Activated CD8-positive, alpha-beta memory T cell treated with anti-CD3 and anti-CD28 coated beads, Interleukin-2, amount 10 ng/mL, durations not matched to agents 7 days and 5 days (primary cell): ENCODE measurements at regions of chr1 and their contacts with region 1.

Region 1: GRCh38 chr1:95233737-95234500 is at the start of gene RWDD3:
- DNase-seq: peak; percentile 93
- ATAC-seq: peak; percentile 96
- H3K4me3 Mint-ChIP-seq: peak within 1 kb of the TSS; percentile 85
- H3K27ac Mint-ChIP-seq: peak within 1 kb of the TSS; percentile 89
- H3K4me1 Mint-ChIP-seq: peaks cover 34% of the 10 kb centered on the region
- H3K27me3 Mint-ChIP-seq: peaks cover 24% of the 10 kb centered on the region
- total RNA-seq, gene RWDD3: 11.7 to 13.8 TPM

Region 2: DNA sequence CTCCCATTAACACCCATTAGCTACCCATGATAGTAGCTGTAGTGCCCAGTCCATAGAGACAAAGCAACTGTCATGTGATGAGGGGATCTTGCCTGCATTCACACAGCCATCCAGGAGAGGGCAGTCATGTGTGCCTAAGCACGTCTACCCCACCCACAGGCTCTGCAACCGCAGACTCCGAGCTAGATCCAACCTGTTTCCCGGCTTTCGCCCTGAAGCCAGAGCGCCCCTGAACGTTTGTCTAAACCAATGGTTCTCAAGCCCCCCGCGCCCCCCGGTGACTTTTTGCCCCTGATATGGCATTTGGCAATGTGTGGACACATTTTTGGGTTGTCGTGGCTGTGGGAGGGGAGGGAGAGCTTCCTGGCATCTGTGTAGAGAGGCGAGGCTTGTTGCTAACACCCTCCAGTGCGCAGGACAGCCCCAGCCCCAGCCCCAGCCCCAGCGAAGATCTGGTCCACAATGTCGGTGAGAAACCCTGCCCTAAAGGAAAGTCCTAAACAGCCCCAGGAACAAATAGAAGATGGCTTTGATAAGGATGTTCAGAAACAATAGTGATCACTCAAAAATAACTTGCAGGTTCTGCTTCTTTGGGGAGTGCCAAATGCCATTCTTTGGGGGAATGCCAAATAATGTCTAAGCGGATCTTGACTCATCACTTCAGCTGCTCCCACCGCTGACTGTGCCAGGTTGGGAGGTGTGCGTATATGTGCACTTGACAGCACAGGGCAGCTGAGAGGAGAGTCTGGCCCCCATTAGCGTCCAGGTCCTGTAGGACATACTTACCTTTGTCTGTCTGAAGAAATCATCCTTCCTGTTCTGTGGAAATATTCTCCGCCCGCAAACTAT is 379.2 kb before region 1 on chr1:
- CTCF ChIA-PET with region 1: interaction called, 16 read pairs
- DNase-seq: peak; percentile 88
- ATAC-seq: peak; percentile 99
- H3K4me3 Mint-ChIP-seq: no peak overlapping the region
- H3K27ac Mint-ChIP-seq: no peak overlapping the region
- H3K4me1 Mint-ChIP-seq: no peaks in the 10 kb centered on the region
- H3K27me3 Mint-ChIP-seq: peaks cover 4% of the 10 kb centered on the region

Region 3: GRCh38 chr1:95072532-95073419 is 161.1 kb before region 1 on chr1 and contains the start of gene ALG14:
- CTCF ChIA-PET with region 1: interaction called, 27 read pairs
- DNase-seq: peak; percentile 95
- ATAC-seq: peak; percentile 97
- H3K4me3 Mint-ChIP-seq: peak within 1 kb of the TSS; percentile 87
- H3K27ac Mint-ChIP-seq: peak within 1 kb of the TSS; percentile 89
- H3K4me1 Mint-ChIP-seq: peaks cover 20% of the 10 kb centered on the region
- H3K27me3 Mint-ChIP-seq: peaks cover 4% of the 10 kb centered on the region
- total RNA-seq, gene ALG14: 2.6 to 2.8 TPM

Region 4: DNA sequence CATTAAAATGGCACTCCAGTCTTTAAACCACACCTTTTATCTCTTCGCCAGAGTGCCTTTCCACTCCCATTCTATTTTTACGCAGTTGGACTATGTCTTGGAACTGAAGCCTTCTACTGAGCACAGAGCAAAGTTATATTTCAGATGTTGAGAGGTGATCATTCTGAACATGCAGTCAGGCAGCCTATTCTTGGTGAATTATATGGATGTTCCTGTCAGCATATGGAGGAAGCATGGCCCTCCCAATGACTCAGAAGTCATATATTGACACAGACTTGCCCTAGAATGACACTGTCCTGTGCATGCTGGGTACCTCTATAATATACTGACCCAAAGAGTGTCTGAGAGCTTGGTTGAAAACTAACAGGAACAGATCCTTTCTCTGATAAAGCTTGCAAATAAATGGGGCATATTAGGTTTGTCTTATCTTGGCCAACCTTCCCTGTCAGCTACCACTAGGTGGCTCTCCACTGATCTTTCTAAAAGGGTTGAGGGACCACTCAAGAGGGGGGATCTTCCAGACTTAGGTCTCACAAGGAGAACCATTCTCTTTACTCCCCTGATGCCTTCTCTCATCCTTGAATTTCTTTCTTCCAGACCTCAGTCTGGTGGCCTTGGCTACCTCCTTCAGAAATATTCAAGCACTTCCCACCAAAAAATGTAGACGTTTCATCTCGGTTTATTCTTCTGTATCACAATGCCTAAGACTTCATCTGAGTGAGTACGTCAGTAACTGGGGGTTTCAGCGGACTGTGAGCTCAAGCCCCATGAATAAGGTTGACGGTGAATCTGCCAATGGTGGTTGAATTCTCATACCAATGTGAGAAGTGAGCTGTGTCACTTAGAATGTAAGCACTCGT is 149.4 kb before region 1 on chr1:
- CTCF ChIA-PET with region 1: interaction called, 18 read pairs
- DNase-seq: no peak
- ATAC-seq: no peak
- H3K4me3 Mint-ChIP-seq: no peak overlapping the region
- H3K27ac Mint-ChIP-seq: no peak overlapping the region
- H3K4me1 Mint-ChIP-seq: no peaks in the 10 kb centered on the region
- H3K27me3 Mint-ChIP-seq: peaks cover 20% of the 10 kb centered on the region

Region 5: DNA sequence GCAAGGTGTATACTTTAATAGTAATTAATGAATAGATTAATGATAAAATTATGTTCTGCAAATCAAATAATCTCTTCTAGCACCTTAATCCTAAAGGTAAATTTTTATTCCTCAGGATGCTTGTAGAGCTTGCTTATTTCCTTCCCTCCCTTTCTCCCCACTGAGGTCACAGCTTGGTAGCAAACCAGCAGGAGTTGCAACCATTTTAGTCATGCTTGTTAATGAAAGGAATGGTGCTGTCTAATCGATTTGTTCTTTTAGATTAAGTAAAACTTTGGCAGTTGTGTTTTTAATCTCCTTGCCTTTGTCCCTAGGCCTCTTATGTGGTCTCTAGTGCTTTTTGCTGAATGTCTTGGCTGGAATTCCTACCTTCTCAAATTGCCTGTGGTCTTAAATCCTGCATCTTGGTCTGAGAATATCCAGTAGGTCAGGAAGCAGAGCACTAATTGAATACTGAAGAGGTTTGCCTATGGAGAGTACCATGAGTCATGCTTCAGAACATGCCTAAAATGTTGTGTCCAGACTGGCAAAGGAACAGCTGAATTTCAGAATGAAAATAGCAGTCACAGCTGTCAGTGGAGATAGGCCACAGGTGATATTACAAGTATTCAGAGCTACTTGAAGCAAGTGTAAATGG is 36.2 kb before region 1 on chr1:
- CTCF ChIA-PET with region 1: no interaction called
- DNase-seq: no peak
- ATAC-seq: no peak
- H3K4me3 Mint-ChIP-seq: no peak overlapping the region
- H3K27ac Mint-ChIP-seq: no peak overlapping the region
- H3K4me1 Mint-ChIP-seq: no peaks in the 10 kb centered on the region
- H3K27me3 Mint-ChIP-seq: no peaks in the 10 kb centered on the region